HepG2 (cell line): ENCODE measurements at regions of chr22 and their contacts with region 1.

Region 1: GRCh38 chr22:41285820-41286638 is at the start of gene RANGAP1:
- DNase-seq: peak; percentile 97
- ATAC-seq: peak; percentile 96
- H3K4me3 ChIP-seq: peak within 1 kb of the TSS; percentile 97 to 100 (median 98)
- H3K27ac ChIP-seq: peak within 1 kb of the TSS; percentile 88
- H3K4me1 ChIP-seq: peaks cover 58% of the 10 kb centered on the region
- H3K27me3 ChIP-seq: no peaks in the 10 kb centered on the region; a peak in 1 of 5 replicates
- CTCF ChIP-seq: peak; percentile 54
- EP300 ChIP-seq: peak; percentile 4 to 41; a peak in 1 of 4 replicates
- POLR2A ChIP-seq: peak; percentile 74 to 81
- RAD21 ChIP-seq: no peak
- total RNA-seq, gene RANGAP1: 71.7 and 83.9 TPM in 2 replicates

Region 2: GRCh38 chr22:41237707-41238569 is 48.1 kb before region 1 on chr22:
- CTCF ChIA-PET with region 1: no interaction called
- POLR2A ChIA-PET with region 1: interaction called, 5 read pairs
- in situ Hi-C with region 1: no loop called
- intact Hi-C with region 1: loop called (anchors 5 kb)
- DNase-seq: no peak
- ATAC-seq: no peak
- H3K4me3 ChIP-seq: no peak overlapping the region
- H3K27ac ChIP-seq: no peak overlapping the region
- H3K4me1 ChIP-seq: peaks cover 32% of the 10 kb centered on the region
- H3K27me3 ChIP-seq: no peaks in the 10 kb centered on the region
- CTCF ChIP-seq: no peak
- EP300 ChIP-seq: no peak
- POLR2A ChIP-seq: no peak
- RAD21 ChIP-seq: no peak

Region 3: DNA sequence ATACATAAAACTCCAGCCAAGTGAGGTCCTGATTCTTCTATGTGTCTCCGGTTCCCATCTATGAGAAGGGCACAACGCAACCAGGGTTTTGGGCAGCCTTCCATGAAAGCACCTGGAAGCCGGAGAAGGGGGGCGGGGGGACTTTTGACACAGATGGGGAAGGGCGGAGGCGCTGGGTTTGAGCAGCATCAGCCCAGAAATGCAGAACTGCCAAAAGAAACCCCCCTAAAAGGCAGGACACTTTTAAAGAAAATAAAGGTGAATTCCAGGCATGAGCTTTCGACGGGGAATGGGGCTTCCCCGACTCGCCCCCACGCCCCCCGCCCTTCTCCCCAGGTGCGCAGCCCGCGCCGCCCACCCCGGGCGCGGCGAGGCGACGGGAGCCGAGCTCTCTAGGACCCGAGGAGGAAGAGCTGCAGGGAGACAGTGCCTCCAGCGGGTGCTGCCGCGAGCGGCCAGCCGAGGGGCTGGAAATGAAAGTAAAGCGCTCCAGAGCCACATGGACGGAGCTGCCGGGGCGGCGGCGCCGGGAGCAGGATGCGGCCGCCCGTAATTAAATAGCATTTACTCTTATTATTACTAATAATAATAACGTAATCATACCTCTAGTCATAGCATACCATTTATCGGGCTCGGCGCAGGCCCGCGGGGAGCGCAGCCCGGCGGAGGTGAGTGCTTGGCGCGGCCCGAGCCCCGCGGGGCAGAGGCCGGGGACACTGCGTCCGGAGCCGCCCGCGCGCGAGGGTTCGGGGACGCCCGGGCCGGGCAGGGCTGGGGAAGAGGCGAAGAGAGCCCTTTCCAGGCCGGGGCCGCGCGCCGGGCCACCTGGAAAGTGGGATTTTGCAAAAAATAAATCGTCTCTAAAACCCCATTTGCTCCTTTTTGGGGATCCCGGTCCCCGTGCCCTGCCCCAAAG is 15.3 kb after region 1 on chr22 and contains the start of gene ZC3H7B:
- CTCF ChIA-PET with region 1: no interaction called
- POLR2A ChIA-PET with region 1: interaction called, 47 read pairs
- in situ Hi-C with region 1: no loop called
- intact Hi-C with region 1: loop called (anchors 1 kb)
- DNase-seq: peak; percentile 76
- ATAC-seq: peak; percentile 97
- H3K4me3 ChIP-seq: peak within 1 kb of the TSS; percentile 88 to 98 (median 93)
- H3K27ac ChIP-seq: peak within 1 kb of the TSS; percentile 82
- H3K4me1 ChIP-seq: peaks cover 56% of the 10 kb centered on the region
- H3K27me3 ChIP-seq: no peaks in the 10 kb centered on the region
- CTCF ChIP-seq: peak; percentile 74
- EP300 ChIP-seq: no peak
- POLR2A ChIP-seq: peak; percentile 69 to 90
- RAD21 ChIP-seq: peak; percentile 71
- total RNA-seq, gene ZC3H7B: 30.6 and 37.2 TPM in 2 replicates